Vagina (tissue), 2 donors: ENCODE measurements at regions of chr18 and their contacts with region 1.

Region 1: GRCh38 chr18:55589625-55590291 is 1.8 kb upstream of the TCF4 start:
- DNase-seq: peak in 1 of 2 donors; percentile 96
- H3K4me3 ChIP-seq: peak overlapping the region; percentile 72 to 77
- H3K27ac ChIP-seq: peak overlapping the region; percentile 97
- H3K4me1 ChIP-seq: peaks cover 25% of the 10 kb centered on the region
- H3K27me3 ChIP-seq: no peaks in the 10 kb centered on the region
- CTCF ChIP-seq: peak in 1 of 3 experiments; percentile 28
- POLR2A ChIP-seq: peak in 1 of 2 donors; percentile 75

Region 2: GRCh38 chr18:55243857-55244256 is 345.9 kb before region 1 on chr18:
- intact Hi-C with region 1: loop called (anchors 10 kb)
- DNase-seq: no peak
- H3K4me3 ChIP-seq: no peak overlapping the region
- H3K27ac ChIP-seq: peak overlapping the region; percentile 63
- H3K4me1 ChIP-seq: peaks cover 39% of the 10 kb centered on the region
- H3K27me3 ChIP-seq: no peaks in the 10 kb centered on the region
- CTCF ChIP-seq: no peak
- POLR2A ChIP-seq: no peak

Region 3: GRCh38 chr18:55422456-55423180 is 167.1 kb before region 1 on chr18:
- intact Hi-C with region 1: loop called (anchors 2 kb)
- DNase-seq: no peak
- H3K4me3 ChIP-seq: peak overlapping the region; percentile 29 to 38
- H3K27ac ChIP-seq: peak overlapping the region; percentile 85
- H3K4me1 ChIP-seq: peaks cover 31% of the 10 kb centered on the region
- H3K27me3 ChIP-seq: no peaks in the 10 kb centered on the region
- CTCF ChIP-seq: no peak
- POLR2A ChIP-seq: no peak